ENCODE measurements at regions of chr5 and their contacts with region 1.

Region 1: DNA sequence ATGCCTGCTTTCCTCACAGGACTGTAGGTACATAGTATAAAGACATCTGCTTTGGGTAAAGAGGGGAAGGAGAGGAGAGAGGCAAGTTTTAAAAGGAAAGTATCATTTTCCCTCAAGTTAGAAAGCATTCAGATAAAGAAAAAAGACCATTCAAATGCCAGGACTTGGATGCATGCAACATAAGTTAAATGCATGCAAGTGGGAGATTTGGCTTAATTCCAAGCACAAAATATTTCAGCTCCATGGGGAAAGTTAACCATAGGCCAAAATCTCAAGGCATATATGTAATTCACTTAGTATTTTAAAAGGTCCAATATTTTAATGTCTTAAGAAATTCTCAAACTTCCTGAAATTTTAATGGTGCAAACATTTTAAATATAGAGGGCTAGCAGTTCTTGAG is 36.4 kb downstream of the POU5F2 start:
- DNase-seq: no peak
- H3K4me3 ChIP-seq: no peak overlapping the region
- H3K27ac ChIP-seq: no peak overlapping the region
- H3K4me1 ChIP-seq: no peaks in the 10 kb centered on the region
- H3K27me3 ChIP-seq: no peaks in the 10 kb centered on the region
- CTCF ChIP-seq: no peak

Region 2: GRCh38 chr5:93717162-93717561 is 12.2 kb after region 1 on chr5:
- CTCF ChIA-PET with region 1: no interaction called
- POLR2A ChIA-PET with region 1: interaction called, 11 read pairs
- intact Hi-C with region 1: no loop called
- DNase-seq: peak in 1 of 2 experiments; percentile 1
- H3K4me3 ChIP-seq: no peak overlapping the region
- H3K27ac ChIP-seq: no peak overlapping the region
- H3K4me1 ChIP-seq: no peaks in the 10 kb centered on the region
- H3K27me3 ChIP-seq: no peaks in the 10 kb centered on the region
- CTCF ChIP-seq: no peak